Panc1 (cell line): ENCODE measurements at regions of chr5 and their contacts with region 1.

Region 1: GRCh38 chr5:168268949-168269943 is 22.2 kb upstream of the WWC1 start:
- DNase-seq: peak; percentile 52
- ATAC-seq: peak; percentile 95
- H3K4me3 ChIP-seq: peak overlapping the region; percentile 43 to 64
- H3K27ac ChIP-seq: peak overlapping the region; percentile 56; the same call in 1 of the 2 replicates
- H3K4me1 ChIP-seq: peaks cover 7% of the 10 kb centered on the region; the same call in 1 of the 2 replicates
- H3K27me3 ChIP-seq: no peaks in the 10 kb centered on the region
- CTCF ChIP-seq: peak; percentile 88

Region 2: GRCh38 chr5:168422431-168422830 is 153.2 kb after region 1 on chr5:
- CTCF ChIA-PET with region 1: no interaction called
- POLR2A ChIA-PET with region 1: no interaction called
- in situ Hi-C with region 1: no loop called
- intact Hi-C with region 1: loop called (anchors 5 kb)
- DNase-seq: no peak
- ATAC-seq: peak; percentile 69; the same call in 1 of the 2 replicates
- H3K4me3 ChIP-seq: no peak overlapping the region
- H3K27ac ChIP-seq: no peak overlapping the region
- H3K4me1 ChIP-seq: no peaks in the 10 kb centered on the region
- H3K27me3 ChIP-seq: no peaks in the 10 kb centered on the region
- CTCF ChIP-seq: no peak; the same call in 1 of the 2 replicates

Region 3: DNA sequence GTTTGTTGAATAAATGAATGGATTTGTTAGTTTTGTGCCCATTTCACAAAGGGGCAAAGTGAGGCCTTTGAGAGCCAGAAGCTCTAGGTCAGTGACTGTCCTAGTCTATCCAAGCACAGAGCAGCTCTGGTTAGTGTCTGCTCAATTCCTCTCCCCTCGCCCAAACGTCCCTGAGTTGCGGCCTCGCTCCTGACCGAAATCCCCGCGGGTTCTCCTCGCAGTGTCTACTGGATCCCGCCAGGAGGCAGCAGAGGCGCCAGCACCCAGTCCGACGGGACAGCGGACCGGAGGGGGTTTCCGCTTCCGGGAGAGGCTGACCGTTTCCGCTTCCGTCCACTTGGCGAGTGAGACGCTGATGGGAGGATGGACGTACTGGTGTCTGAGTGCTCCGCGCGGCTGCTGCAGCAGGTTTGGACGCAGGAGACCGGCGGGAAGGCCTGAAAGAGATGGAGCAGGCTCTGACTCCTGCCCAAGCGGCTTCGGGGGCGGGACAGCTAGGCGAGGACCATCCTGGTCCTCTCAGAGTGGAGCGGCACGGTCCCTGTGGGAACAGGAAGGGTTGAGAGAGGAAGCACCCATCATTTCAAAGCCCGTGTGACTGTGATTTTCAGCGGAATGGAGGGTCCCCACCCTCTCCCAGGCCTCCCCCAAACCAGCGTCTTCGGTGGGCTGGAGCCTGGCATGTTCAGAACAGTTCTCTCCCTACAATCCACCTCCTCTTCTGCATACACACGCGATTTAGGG is 217.1 kb after region 1 on chr5 and contains the start of gene RARS1:
- CTCF ChIA-PET with region 1: no interaction called
- POLR2A ChIA-PET with region 1: no interaction called
- in situ Hi-C with region 1: no loop called
- intact Hi-C with region 1: loop called (anchors 2 kb)
- DNase-seq: peak; percentile 90
- ATAC-seq: peak; percentile 99
- H3K4me3 ChIP-seq: peak within 1 kb of the TSS; percentile 95 to 99
- H3K27ac ChIP-seq: peak within 1 kb of the TSS; percentile 93
- H3K4me1 ChIP-seq: no peaks in the 10 kb centered on the region; the same call in 1 of the 2 replicates
- H3K27me3 ChIP-seq: no peaks in the 10 kb centered on the region
- CTCF ChIP-seq: peak; percentile 98
- total RNA-seq, gene RARS1: 128 TPM

Region 4: DNA sequence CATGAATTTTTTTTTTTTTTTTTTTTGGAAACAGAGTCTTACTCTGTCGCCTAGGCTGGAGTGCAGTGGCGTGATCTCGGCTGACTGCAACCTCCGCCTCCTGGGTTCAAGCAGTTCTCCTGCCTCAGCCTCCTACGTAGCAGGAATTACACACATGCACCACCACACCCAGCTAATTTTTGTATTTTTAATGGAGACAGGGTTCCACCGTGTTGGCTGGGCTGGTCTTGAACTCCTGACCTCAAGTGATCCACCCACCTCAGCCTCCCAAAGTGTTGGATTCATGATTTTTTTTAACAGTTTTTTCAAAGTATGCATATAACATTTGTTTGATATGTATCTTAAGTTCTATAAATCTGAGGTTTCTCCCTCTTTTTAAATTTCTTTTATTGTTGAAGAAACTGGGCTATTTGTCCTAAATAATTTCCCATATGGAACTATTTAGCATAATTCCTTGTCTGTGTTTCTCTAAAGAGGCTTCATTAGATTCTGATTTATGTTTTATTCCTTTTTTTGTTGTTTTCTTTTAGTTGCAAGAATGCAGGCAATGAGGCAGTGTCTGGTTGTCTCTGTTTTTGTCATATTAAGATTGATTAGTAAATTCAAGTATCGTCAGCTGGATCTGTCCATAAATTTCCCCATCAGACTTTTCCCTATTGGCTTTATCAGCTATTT is 233.5 kb after region 1 on chr5:
- CTCF ChIA-PET with region 1: no interaction called
- POLR2A ChIA-PET with region 1: interaction called, 13 read pairs
- in situ Hi-C with region 1: no loop called
- intact Hi-C with region 1: no loop called
- DNase-seq: no peak
- ATAC-seq: no peak
- H3K4me3 ChIP-seq: no peak overlapping the region
- H3K27ac ChIP-seq: no peak overlapping the region
- H3K4me1 ChIP-seq: no peaks in the 10 kb centered on the region
- H3K27me3 ChIP-seq: no peaks in the 10 kb centered on the region
- CTCF ChIP-seq: no peak

Region 5: DNA sequence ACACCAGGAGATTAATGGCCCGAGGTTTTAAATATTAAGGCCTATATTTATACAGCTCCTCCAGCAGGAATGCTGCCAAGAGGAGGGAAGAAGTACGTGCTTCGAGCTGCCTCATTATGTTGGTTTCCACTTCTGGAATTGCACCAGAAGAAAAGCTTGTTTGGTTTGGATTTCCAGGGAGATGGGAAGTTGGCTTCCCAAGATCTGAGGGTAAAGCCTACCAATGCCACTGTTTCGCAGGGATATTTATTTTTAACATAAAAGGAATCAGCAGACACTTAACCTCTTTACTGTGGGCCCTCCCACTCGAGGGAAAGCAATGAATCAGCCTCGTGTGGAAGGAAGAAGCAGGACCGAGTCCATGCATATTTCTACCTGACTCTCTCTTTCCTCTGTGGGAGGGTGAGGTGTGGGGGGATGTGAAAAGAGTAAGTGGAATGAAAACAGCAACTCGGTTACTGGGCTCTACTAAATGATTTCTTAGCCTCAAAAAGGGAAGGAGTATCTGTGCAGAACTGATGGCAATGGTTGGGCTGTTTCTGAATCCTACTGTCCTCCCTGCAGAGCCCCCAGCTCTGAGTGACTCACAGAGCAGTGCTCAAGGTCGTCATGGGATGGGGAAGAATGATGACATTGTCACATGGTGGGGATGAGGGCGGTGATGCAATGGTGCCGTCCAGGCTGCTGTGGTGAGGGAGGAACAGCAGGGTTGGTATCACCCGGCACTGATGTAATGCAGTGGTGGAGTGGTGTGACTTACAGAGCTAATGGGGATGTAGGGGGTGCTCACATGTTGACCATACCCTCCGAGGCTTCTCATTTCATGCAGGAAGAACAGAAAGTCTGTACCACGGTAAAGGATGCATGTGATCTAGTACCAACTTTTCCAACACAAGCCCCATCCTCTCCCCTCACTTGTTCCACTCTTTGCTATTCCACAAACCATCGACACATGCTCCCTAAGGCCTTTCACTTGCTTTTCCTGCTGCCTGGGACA is 524.9 kb after region 1 on chr5:
- CTCF ChIA-PET with region 1: no interaction called
- POLR2A ChIA-PET with region 1: interaction called, 10 read pairs
- in situ Hi-C with region 1: no loop called
- intact Hi-C with region 1: no loop called
- DNase-seq: no peak
- ATAC-seq: no peak
- H3K4me3 ChIP-seq: no peak overlapping the region
- H3K27ac ChIP-seq: no peak overlapping the region
- H3K4me1 ChIP-seq: no peaks in the 10 kb centered on the region
- H3K27me3 ChIP-seq: no peaks in the 10 kb centered on the region
- CTCF ChIP-seq: no peak